GM10248 (cell line): ENCODE measurements at regions of chr1 and their contacts with region 1.

Region 1: DNA sequence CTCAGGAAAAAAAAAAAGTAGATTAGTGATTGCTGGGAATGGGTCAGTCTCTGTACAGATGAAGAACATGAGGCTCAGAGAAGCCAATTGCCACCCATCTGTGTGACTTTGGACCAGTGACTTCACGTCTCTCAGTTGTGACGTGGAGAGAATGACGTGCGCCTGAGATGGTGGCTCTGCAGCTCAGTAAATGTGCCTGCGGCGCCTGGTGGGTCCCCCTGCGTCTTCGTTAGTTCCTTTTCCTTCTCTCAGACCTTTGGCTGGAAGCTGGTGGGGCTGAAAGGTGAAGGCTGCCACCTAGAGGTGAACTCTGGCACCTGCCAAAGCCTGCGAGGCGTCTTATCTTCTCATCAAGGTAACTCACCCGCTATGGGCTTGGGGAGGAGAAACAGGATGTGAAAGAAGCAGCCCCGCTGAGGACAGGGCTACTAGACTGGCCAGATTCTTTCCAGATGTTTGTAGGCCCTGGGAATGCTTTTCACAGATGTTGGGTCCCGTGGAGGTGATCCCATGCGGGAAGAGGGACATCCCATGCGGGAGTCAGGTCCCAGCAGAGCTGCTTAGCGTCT is 8.7 kb upstream of the E2F2 start:
- DNase-seq: peak; percentile 91
- CTCF ChIP-seq: peak; percentile 95

Region 2: GRCh38 chr1:23216771-23217420 is 322.9 kb before region 1 on chr1:
- CTCF ChIA-PET with region 1: no interaction called
- POLR2A ChIA-PET with region 1: no interaction called
- DNase-seq: peak; percentile 63
- CTCF ChIP-seq: peak; percentile 51

Region 3: GRCh38 chr1:23507507-23507906 is 32.3 kb before region 1 on chr1:
- CTCF ChIA-PET with region 1: interaction called, 508 read pairs
- POLR2A ChIA-PET with region 1: no interaction called
- DNase-seq: no peak
- CTCF ChIP-seq: no peak

Region 4: GRCh38 chr1:23514111-23514679 is 25.6 kb before region 1 on chr1:
- CTCF ChIA-PET with region 1: interaction called, 20 read pairs
- POLR2A ChIA-PET with region 1: no interaction called
- DNase-seq: no peak
- CTCF ChIP-seq: no peak

Region 5: GRCh38 chr1:23559136-23559984 is 19.6 kb after region 1 on chr1 and contains the start of gene ID3:
- CTCF ChIA-PET with region 1: interaction called, 17 read pairs
- POLR2A ChIA-PET with region 1: interaction called, 5 read pairs
- DNase-seq: peak; percentile 89
- CTCF ChIP-seq: no peak

Region 6: GRCh38 chr1:23699280-23700179 is 159.7 kb after region 1 on chr1:
- CTCF ChIA-PET with region 1: no interaction called
- POLR2A ChIA-PET with region 1: no interaction called
- DNase-seq: no peak
- CTCF ChIP-seq: no peak